Caki2 (cell line): ENCODE measurements at regions of chr10 and their contacts with region 1.

Region 1: GRCh38 chr10:89217057-89217990 is 10.2 kb upstream of the CH25H start:
- DNase-seq: peak; percentile 55

Region 2: GRCh38 chr10:89001024-89001728 is 216.1 kb before region 1 on chr10:
- in situ Hi-C with region 1: loop called (anchors 25 kb)
- DNase-seq: no peak

Region 3: GRCh38 chr10:89450901-89451300 is 233.6 kb after region 1 on chr10:
- in situ Hi-C with region 1: no loop called
- DNase-seq: no peak